IMR-90 (cell line): ENCODE measurements at regions of chr6 and their contacts with region 1.

Region 1: GRCh38 chr6:106591111-106591825 is 38.0 kb downstream of the RTN4IP1 start:
- DNase-seq: peak; percentile 88
- ATAC-seq: peak; percentile 96
- H3K4me3 ChIP-seq: no peak overlapping the region
- H3K27ac ChIP-seq: peak overlapping the region; percentile 86
- H3K4me1 ChIP-seq: peaks cover 6% of the 10 kb centered on the region
- H3K27me3 ChIP-seq: no peaks in the 10 kb centered on the region
- CTCF ChIP-seq: no peak
- POLR2A ChIP-seq: no peak
- RAD21 ChIP-seq: no peak

Region 2: DNA sequence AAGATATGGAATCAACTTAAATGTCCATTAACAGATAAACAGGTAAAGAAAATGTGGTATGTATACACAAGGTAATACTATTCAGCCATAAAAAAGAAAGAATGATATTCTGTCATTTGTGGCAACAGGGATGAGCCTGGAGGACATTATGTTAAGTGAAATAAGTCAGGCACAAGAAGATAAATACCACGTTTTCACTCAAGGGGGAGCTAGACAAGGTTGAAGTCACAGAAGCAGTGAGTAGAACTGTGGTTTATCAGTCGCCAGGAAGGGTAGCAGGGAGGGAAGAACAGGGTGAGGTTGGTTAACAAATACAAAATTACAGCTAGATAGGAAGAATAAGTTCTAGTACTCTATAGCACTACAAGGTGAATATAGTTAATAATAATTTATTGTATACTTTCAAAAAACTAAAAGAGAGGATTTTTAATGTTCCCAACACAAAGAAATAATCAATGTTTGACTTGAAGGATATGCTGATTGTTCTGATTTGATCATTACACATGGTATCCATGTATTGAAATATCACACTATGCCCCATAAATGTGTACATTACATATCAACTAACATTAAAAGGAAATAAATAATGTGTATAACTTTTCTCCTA is 16.9 kb after region 1 on chr6:
- CTCF ChIA-PET with region 1: interaction called, 3 read pairs
- POLR2A ChIA-PET with region 1: no interaction called
- dilution Hi-C with region 1: no loop called
- in situ Hi-C with region 1: no loop called
- intact Hi-C with region 1: loop called (anchors 2 kb)
- DNase-seq: peak; percentile 49
- ATAC-seq: peak; percentile 59
- H3K4me3 ChIP-seq: no peak overlapping the region
- H3K27ac ChIP-seq: no peak overlapping the region
- H3K4me1 ChIP-seq: no peaks in the 10 kb centered on the region
- H3K27me3 ChIP-seq: no peaks in the 10 kb centered on the region
- CTCF ChIP-seq: peak; percentile 48
- POLR2A ChIP-seq: no peak
- RAD21 ChIP-seq: peak; percentile 20

Region 3: DNA sequence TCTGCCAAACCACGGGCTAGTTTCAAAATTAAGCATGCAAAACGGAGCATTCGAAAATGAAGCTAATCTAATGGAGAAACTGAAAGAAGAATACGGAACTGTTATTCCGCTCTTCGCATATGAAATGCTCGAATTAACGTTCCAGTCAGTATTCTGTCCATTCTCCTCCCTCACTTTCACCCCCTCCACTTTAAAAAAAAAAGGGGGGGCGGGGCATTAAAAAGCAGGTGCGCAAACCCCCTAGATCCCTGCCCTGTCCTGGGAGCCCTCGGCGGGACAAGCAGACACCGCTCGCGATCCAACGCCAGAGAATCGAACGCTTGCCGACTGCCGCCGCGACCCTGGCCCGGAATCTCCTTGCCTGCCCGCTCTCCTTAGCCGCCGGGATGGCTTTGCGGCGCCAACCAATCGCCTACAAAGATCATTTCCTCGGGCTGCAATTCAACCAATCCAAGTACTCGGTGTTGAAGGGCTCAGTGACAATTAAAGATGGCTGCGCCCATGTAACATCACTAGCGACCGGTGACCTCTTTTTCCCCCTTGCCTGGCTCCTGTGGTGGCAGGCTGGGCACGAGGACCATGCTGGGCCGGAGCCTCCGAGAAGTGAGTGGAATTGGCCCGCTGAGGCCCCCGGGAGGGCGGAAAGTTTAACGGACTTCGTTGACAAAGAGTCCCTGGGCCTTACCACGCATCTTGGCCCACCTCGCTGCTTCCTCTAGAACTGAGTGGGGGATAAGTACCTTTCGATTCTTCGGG is 38.0 kb after region 1 on chr6 and contains the starts of genes QRSL1 and RTN4IP1:
- CTCF ChIA-PET with region 1: interaction called, 3 read pairs
- POLR2A ChIA-PET with region 1: no interaction called
- dilution Hi-C with region 1: no loop called
- in situ Hi-C with region 1: no loop called
- intact Hi-C with region 1: loop called (anchors 5 kb)
- DNase-seq: peak; percentile 92
- ATAC-seq: peak; percentile 95
- H3K4me3 ChIP-seq: peak within 1 kb of the TSS; percentile 85
- H3K27ac ChIP-seq: peak within 1 kb of the TSS; percentile 77
- H3K4me1 ChIP-seq: peaks cover 6% of the 10 kb centered on the region
- H3K27me3 ChIP-seq: no peaks in the 10 kb centered on the region
- CTCF ChIP-seq: no peak
- POLR2A ChIP-seq: peak; percentile 63; the same call in 1 of the 2 replicates
- RAD21 ChIP-seq: no peak
- total RNA-seq, gene QRSL1: 10.6 and 10.9 TPM in 2 replicates
- total RNA-seq, gene RTN4IP1: 9.9 and 11.7 TPM in 2 replicates

Region 4: DNA sequence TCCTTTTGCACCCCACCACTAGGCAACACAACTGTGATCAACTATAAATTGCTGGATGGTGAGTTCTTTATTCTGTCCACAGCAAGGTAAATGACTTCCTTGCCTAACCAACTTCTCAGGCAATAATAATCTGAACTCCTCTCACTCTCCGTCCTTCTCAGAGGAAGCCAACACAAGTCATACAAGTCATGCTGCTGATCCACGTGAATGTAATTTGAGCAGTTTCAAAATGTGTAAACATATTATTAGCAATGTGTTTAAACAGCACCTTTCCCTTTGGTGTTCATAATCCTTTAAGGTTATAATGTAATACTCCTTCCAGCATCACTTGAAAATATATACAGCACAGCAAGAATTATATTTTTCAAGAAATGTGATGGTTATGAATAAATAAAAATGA is 166.0 kb after region 1 on chr6:
- CTCF ChIA-PET with region 1: no interaction called
- POLR2A ChIA-PET with region 1: no interaction called
- dilution Hi-C with region 1: no loop called
- in situ Hi-C with region 1: no loop called
- intact Hi-C with region 1: no loop called
- DNase-seq: no peak
- ATAC-seq: no peak
- H3K4me3 ChIP-seq: no peak overlapping the region
- H3K27ac ChIP-seq: no peak overlapping the region
- H3K4me1 ChIP-seq: no peaks in the 10 kb centered on the region
- H3K27me3 ChIP-seq: no peaks in the 10 kb centered on the region
- CTCF ChIP-seq: no peak
- POLR2A ChIP-seq: no peak
- RAD21 ChIP-seq: no peak